HEK293 (cell line): ENCODE measurements at regions of chr15 and their contacts with region 1.

Region 1: DNA sequence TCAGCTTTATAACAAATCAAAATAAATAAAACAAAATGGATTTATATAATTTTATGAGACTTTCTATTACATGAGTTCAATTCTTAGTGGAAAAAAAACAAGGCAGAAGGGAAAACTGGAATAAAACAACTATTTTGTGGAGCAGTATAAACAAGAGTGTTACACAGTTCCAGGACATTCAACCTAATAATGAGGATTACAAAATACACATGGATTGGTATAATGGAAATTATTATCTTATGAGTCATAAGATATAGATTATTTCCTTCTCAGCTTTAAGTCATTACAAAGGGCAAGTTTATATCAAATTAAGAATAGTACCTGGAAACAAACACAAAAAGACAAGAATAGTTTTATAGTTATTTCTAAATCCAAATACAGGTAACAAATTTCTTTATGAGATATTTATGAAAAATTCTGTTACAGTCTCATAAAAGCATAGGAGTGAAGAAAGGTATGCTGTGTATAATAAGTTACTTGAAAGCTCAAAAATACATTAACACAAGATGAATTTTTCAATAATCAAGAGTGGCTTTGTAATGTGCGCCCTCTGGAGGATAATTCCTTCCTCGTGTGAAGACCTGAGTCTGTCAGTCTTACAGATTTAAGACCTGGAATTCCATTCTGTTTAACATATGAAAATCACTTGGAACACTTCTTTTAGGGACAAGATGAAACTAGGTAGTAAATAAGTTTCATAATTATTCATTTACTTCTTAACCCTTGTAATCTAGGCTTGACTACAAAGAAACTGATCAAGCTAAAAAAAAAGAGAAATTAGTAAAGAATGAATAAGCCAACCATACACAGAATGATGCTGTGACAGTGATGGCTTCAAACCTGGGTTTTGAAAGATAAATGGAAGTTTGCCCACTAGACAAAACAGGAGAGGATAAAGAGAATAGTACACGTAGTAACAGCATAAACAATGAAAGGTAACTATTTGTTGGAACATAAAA is 9.5 kb downstream of the COPS2 start:
- H3K4me3 ChIP-seq: no peak overlapping the region
- H3K27ac ChIP-seq: no peak overlapping the region
- H3K4me1 ChIP-seq: no peaks in the 10 kb centered on the region
- CTCF ChIP-seq: no peak

Region 2: GRCh38 chr15:49135893-49136292 is 10.0 kb before region 1 on chr15:
- CTCF ChIA-PET with region 1: interaction called, 18 read pairs
- POLR2A ChIA-PET with region 1: no interaction called
- H3K4me3 ChIP-seq: no peak overlapping the region
- H3K27ac ChIP-seq: no peak overlapping the region
- H3K4me1 ChIP-seq: no peaks in the 10 kb centered on the region
- CTCF ChIP-seq: no peak

Region 3: DNA sequence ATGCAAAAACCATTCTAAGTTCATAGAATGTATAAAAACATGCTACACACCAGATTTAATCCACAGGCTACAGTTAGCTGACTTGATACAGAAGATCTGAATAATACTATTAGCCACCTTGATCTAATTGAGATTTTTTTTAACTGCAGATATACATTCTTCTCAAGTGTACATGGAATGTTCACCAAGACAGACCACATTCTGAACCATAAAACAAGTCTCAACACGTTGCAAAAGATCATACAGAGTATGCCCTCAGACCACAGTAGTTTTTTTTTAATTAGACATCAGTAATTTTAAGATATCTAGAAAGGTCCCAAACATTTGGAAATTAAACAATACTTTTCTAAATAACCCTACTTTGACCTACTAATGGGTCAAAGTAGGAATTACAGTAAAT is 360.4 kb after region 1 on chr15:
- CTCF ChIA-PET with region 1: no interaction called
- POLR2A ChIA-PET with region 1: no interaction called
- H3K4me3 ChIP-seq: no peak overlapping the region
- H3K27ac ChIP-seq: no peak overlapping the region
- H3K4me1 ChIP-seq: no peaks in the 10 kb centered on the region
- CTCF ChIP-seq: no peak